MCF 10A (cell line): ENCODE measurements at regions of chr2 and their contacts with region 1.

Region 1: GRCh38 chr2:182650704-182651103 is 65.4 kb upstream of the DNAJC10 start:
- DNase-seq: peak; percentile 66
- H3K4me3 Mint-ChIP-seq: no peak overlapping the region
- H3K27ac Mint-ChIP-seq: no peak overlapping the region
- H3K4me1 Mint-ChIP-seq: peaks cover 5% of the 10 kb centered on the region
- H3K27me3 Mint-ChIP-seq: no peaks in the 10 kb centered on the region
- CTCF ChIP-seq: peak; percentile 43

Region 2: DNA sequence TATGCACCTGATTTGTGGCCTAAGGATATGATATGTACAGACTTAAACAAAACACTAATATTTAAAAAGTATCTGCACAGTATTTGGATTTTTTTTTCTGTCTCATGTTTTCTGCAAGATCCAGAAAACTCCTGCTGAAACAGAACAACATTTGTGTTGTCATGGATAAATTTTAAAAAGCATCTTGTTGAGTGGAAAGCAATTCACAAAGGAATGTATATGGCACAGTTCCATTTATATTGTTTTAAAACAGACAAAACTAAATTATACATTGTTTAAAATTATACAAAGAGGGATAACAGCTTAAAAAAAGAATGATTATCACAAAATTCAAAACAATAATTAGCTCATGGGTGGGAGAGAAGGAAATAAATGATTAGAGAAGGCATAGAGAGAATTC is 471.5 kb before region 1 on chr2:
- CTCF ChIA-PET with region 1: interaction called, 138 read pairs
- POLR2A ChIA-PET with region 1: no interaction called
- intact Hi-C with region 1: no loop called
- DNase-seq: no peak
- H3K4me3 Mint-ChIP-seq: no peak overlapping the region
- H3K27ac Mint-ChIP-seq: no peak overlapping the region
- H3K4me1 Mint-ChIP-seq: no peaks in the 10 kb centered on the region
- H3K27me3 Mint-ChIP-seq: no peaks in the 10 kb centered on the region
- CTCF ChIP-seq: no peak

Region 3: DNA sequence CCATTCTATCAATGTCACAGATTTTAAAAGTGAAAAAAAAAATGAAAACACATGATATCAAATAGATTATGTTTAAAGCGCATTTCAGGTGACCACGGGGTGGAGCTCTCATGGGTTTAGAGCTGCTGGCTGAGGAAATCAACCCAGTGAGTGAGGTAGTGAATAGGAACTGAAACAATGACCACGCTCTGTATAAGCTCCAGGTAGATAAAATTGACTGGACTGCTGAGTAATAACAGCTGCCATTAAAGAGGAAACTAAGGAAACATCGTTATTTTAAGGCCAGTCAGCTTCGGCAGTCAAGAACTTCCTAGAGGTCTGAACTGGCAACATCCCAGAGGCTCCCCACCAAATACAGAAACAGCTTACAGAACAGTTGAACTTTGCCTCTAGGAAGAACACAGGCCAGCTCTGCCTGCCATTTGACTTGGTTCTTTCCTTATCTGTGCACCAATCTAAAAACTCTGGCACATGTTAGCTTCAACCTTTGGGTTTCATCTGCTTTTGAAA is 409.8 kb before region 1 on chr2:
- CTCF ChIA-PET with region 1: interaction called, 39 read pairs
- POLR2A ChIA-PET with region 1: no interaction called
- intact Hi-C with region 1: loop called (anchors 1 kb)
- DNase-seq: peak; percentile 63
- H3K4me3 Mint-ChIP-seq: no peak overlapping the region
- H3K27ac Mint-ChIP-seq: peak overlapping the region; percentile 20
- H3K4me1 Mint-ChIP-seq: peaks cover 6% of the 10 kb centered on the region
- H3K27me3 Mint-ChIP-seq: no peaks in the 10 kb centered on the region
- CTCF ChIP-seq: peak; percentile 41

Region 4: DNA sequence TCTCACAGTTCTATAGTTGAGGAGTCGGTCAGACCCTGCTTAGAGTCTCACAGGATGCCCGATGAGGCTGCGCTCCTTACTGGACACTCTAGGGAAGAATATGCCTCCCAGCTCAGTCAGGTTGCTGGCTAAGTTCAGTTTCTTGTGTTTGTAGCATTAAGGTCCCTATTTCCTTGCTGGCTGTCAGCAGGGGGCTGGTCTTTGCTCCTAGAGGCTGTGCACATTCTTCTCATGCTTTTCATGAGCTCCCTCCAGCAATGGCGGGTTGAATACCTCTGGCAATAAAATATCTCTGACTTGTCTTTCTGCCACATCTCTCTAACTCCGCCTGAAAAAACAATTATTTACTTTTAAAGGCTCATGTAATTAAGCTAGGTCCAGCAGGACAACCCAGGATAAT is 14.0 kb before region 1 on chr2:
- CTCF ChIA-PET with region 1: interaction called, 11 read pairs
- POLR2A ChIA-PET with region 1: no interaction called
- intact Hi-C with region 1: no loop called
- DNase-seq: no peak
- H3K4me3 Mint-ChIP-seq: no peak overlapping the region
- H3K27ac Mint-ChIP-seq: no peak overlapping the region
- H3K4me1 Mint-ChIP-seq: no peaks in the 10 kb centered on the region
- H3K27me3 Mint-ChIP-seq: no peaks in the 10 kb centered on the region
- CTCF ChIP-seq: no peak

Region 5: GRCh38 chr2:182672471-182673165 is 21.9 kb after region 1 on chr2:
- CTCF ChIA-PET with region 1: no interaction called
- POLR2A ChIA-PET with region 1: no interaction called
- intact Hi-C with region 1: no loop called
- DNase-seq: peak; percentile 37
- H3K4me3 Mint-ChIP-seq: no peak overlapping the region
- H3K27ac Mint-ChIP-seq: no peak overlapping the region
- H3K4me1 Mint-ChIP-seq: peaks cover 9% of the 10 kb centered on the region
- H3K27me3 Mint-ChIP-seq: no peaks in the 10 kb centered on the region
- CTCF ChIP-seq: no peak